ENCODE measurements at regions of chr13 and their contacts with region 1.

Region 1: DNA sequence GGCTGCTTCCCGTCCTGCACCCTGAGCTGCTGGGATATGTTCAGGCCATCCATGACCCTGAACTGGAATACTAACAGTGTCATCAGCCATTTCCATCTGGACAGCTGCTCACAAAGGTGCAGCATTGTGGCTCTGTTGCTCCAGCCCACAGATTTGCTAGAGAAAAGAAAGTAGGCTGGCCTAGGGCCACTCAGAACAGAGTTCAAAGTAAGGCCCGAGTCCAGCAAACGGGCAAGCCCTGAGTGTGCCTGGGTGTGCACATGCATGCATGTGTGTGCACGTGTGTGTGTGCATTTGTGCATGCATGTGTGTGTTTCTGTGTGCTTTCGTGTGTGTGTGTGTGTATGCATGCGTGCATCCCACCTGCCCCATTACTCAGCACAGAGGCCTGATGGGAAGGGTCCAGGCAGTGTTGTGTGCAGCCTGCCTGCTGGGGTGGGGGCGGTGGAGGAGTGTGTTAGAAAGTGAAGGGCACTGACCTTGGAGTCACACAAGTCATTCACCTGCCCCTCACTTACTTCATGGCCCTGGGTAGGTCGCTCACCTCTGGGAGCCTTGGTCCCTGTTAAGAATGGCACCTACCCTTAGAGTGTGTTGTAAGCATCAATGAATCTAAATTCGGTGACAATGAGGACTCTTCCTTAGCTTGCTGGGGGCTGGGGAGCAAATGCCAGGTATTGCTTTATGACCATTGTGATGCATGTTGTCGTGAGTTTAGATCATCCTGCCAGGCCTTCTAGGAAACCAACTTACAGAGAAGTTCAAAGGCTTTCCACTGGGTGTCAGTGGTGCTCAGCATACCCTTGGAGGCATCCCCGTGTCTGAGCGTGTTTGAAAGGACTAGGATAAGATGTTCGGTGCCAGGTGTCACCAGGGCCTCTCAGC is 53.2 kb downstream of the GPR12 start:
- DNase-seq: peak; percentile 13
- H3K4me3 Mint-ChIP-seq: no peak overlapping the region
- H3K27ac Mint-ChIP-seq: no peak overlapping the region
- H3K4me1 Mint-ChIP-seq: no peaks in the 10 kb centered on the region
- H3K27me3 Mint-ChIP-seq: peaks cover 3% of the 10 kb centered on the region

Region 2: GRCh38 chr13:26872525-26873385 is 165.4 kb after region 1 on chr13:
- intact Hi-C with region 1: loop called (anchors 1 kb)
- DNase-seq: peak; percentile 28
- H3K4me3 Mint-ChIP-seq: no peak overlapping the region
- H3K27ac Mint-ChIP-seq: no peak overlapping the region
- H3K4me1 Mint-ChIP-seq: no peaks in the 10 kb centered on the region
- H3K27me3 Mint-ChIP-seq: peaks cover 2% of the 10 kb centered on the region

Region 3: DNA sequence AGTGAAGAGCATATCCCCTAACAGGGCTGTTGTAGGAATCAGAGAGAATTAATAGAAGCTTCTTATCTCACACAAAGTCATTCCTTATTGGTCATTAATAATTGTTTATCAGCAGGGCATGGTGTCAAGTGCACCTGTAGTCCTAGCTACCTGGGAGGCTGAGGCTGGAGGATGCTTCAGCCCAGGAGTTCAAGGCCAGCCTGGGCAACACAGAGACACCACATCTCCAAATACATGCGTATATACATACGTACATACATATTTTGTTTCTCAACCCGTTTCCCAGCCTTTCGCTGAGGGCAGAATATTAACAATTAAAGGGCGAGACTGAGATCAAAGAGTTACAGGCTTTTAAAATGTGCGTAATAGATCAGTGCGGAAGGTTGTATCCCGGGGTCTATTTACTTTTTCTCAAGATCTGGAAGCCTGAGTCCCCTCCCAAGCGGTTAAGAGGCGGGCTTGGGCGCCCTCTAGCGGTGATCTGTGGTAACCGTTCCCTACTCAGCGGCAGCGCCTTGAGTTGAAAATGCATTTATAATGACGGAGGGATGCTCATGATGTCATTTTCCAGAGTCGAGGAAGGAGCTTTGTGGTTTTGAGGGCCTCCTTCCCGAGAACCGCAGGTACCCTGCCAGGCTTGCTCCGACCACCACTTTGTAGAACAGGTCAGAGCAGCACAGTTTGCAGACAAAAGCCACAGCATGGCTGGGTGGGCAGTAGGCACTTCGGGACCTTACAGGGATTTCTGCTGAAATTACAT is 222.8 kb after region 1 on chr13:
- intact Hi-C with region 1: loop called (anchors 2 kb)
- DNase-seq: peak; percentile 48
- H3K4me3 Mint-ChIP-seq: no peak overlapping the region
- H3K27ac Mint-ChIP-seq: no peak overlapping the region
- H3K4me1 Mint-ChIP-seq: peaks cover 3% of the 10 kb centered on the region
- H3K27me3 Mint-ChIP-seq: peaks cover 11% of the 10 kb centered on the region